Endothelial cell of umbilical vein (primary cell): ENCODE measurements at regions of chr13 and their contacts with region 1.

Region 1: DNA sequence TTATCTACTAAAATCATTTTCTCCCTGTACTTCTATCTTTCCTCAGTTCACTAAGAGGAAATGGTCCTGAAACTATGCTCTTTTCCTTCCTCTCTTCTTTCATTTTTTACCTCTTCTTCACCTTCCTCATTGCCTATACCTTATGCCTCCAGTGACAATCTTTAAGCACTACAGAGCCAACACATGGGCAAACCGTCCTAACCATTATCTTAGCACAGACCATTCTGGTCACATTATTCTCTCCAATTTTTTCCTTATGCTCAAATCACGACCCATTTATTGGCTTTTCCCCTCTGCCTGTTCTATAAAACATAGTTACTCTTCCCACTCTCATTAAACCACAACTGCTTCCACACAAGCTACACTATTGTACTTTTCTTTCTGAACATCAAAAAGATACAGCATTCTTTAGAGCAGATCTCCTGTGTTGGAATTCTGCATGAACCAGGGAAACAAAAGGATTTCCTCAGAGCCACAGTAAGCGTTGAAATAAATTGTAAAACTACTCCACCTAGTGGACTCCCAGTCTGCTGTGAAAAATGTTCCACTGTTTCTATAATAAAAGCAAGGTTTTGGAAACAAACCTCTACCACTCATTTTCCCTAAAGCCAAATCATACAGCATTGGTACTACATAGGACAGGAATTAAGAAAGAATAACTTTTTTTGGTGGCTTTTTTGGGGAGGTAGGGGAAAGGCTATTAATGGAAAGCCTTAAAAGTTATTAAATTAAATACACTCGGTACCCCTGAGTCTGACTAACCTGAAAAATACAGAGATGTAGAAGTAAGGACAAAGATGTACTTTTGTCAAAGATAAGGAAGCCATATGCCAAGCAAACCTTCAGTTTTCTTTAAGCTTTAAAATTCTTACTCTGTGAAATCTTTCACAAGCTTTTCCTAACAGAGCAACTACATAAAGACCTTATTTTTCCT is 19.5 kb downstream of the NUFIP1 start:
- DNase-seq: peak; percentile 66
- H3K4me3 ChIP-seq: no peak overlapping the region
- H3K27ac ChIP-seq: peak overlapping the region; percentile 1
- H3K4me1 ChIP-seq: peaks cover 44% of the 10 kb centered on the region
- H3K27me3 ChIP-seq: no peaks in the 10 kb centered on the region
- CTCF ChIP-seq: peak; percentile 40 to 56
- POLR2A ChIP-seq: no peak

Region 2: GRCh38 chr13:43905435-43906031 is 1064.3 kb before region 1 on chr13:
- CTCF ChIA-PET with region 1: no interaction called
- POLR2A ChIA-PET with region 1: no interaction called
- dilution Hi-C with region 1: no loop called
- intact Hi-C with region 1: loop called (anchors 5 kb)
- DNase-seq: peak; percentile 68
- H3K4me3 ChIP-seq: no peak overlapping the region
- H3K27ac ChIP-seq: no peak overlapping the region
- H3K4me1 ChIP-seq: no peaks in the 10 kb centered on the region
- H3K27me3 ChIP-seq: peaks cover 0 to 6% of the 10 kb centered on the region in 2 experiments
- CTCF ChIP-seq: peak; percentile 43 to 45
- POLR2A ChIP-seq: no peak

Region 3: GRCh38 chr13:44710576-44710975 is 259.2 kb before region 1 on chr13:
- CTCF ChIA-PET with region 1: interaction called, 6 read pairs
- POLR2A ChIA-PET with region 1: no interaction called
- dilution Hi-C with region 1: no loop called
- intact Hi-C with region 1: loop called (anchors 5 kb)
- DNase-seq: peak; percentile 92
- H3K4me3 ChIP-seq: peak overlapping the region in 1 of 3 experiments; percentile 29
- H3K27ac ChIP-seq: peak overlapping the region; percentile 91
- H3K4me1 ChIP-seq: peaks cover 38% of the 10 kb centered on the region
- H3K27me3 ChIP-seq: no peaks in the 10 kb centered on the region
- CTCF ChIP-seq: no peak
- POLR2A ChIP-seq: no peak

Region 4: DNA sequence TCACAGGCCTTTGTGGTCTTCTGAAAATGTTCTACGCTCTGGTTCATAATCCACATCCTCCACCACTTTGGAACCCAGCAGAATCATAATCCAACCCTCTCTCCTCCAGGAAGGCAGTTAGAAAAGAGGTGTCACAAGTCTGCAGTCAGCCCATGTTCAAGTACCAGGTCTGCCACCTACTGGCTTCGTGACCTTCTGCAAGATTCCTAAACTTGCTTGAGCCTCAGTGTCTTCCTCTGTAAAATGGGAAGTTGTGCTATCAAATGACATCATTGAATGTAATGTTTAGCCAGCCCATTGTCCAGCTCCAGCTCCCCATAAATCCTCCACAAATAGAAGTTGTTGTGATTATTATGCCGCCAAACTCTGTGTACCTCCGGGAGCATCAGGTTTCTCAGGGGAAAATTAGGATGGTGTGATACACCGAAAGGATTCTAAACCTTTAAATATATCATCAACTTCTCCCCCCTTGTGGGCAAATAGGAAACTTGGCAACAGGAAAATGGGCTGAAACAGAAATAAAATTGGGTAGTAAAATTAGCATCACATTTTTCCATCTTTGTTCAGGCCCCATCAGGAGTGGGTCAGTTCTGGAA is 90.3 kb before region 1 on chr13:
- CTCF ChIA-PET with region 1: interaction called, 8 read pairs
- POLR2A ChIA-PET with region 1: no interaction called
- dilution Hi-C with region 1: no loop called
- intact Hi-C with region 1: loop called (anchors 2 kb)
- DNase-seq: peak; percentile 48
- H3K4me3 ChIP-seq: no peak overlapping the region
- H3K27ac ChIP-seq: no peak overlapping the region
- H3K4me1 ChIP-seq: peaks cover 12% of the 10 kb centered on the region
- H3K27me3 ChIP-seq: no peaks in the 10 kb centered on the region
- CTCF ChIP-seq: peak; percentile 47 to 52
- POLR2A ChIP-seq: no peak

Region 5: GRCh38 chr13:44930963-44931623 is 38.7 kb before region 1 on chr13:
- CTCF ChIA-PET with region 1: interaction called, 8 read pairs
- POLR2A ChIA-PET with region 1: no interaction called
- dilution Hi-C with region 1: no loop called
- intact Hi-C with region 1: loop called (anchors 5 kb)
- DNase-seq: no peak
- H3K4me3 ChIP-seq: no peak overlapping the region
- H3K27ac ChIP-seq: peak overlapping the region; percentile 94
- H3K4me1 ChIP-seq: peaks cover 63% of the 10 kb centered on the region
- H3K27me3 ChIP-seq: no peaks in the 10 kb centered on the region
- CTCF ChIP-seq: no peak
- POLR2A ChIP-seq: no peak

Region 6: GRCh38 chr13:45047394-45048310 is 77.8 kb after region 1 on chr13:
- CTCF ChIA-PET with region 1: interaction called, 14 read pairs
- POLR2A ChIA-PET with region 1: no interaction called
- dilution Hi-C with region 1: no loop called
- intact Hi-C with region 1: no loop called
- DNase-seq: peak; percentile 88
- H3K4me3 ChIP-seq: peak overlapping the region; percentile 17 to 64 (median 36)
- H3K27ac ChIP-seq: no peak overlapping the region
- H3K4me1 ChIP-seq: peaks cover 7% of the 10 kb centered on the region
- H3K27me3 ChIP-seq: peaks cover 0 to 4% of the 10 kb centered on the region in 2 experiments
- CTCF ChIP-seq: peak; percentile 82 to 84
- POLR2A ChIP-seq: no peak

Region 7: GRCh38 chr13:45310341-45311125 is 340.7 kb after region 1 on chr13:
- CTCF ChIA-PET with region 1: interaction called, 35 read pairs
- POLR2A ChIA-PET with region 1: no interaction called
- dilution Hi-C with region 1: no loop called
- intact Hi-C with region 1: loop called (anchors 1 kb)
- DNase-seq: no peak
- H3K4me3 ChIP-seq: peak overlapping the region in 1 of 3 experiments; percentile 15
- H3K27ac ChIP-seq: no peak overlapping the region
- H3K4me1 ChIP-seq: peaks cover 10% of the 10 kb centered on the region
- H3K27me3 ChIP-seq: peaks cover 0 to 2% of the 10 kb centered on the region in 2 experiments
- CTCF ChIP-seq: no peak
- POLR2A ChIP-seq: no peak